ENCODE measurements at regions of chr18 and their contacts with region 1.

Region 1: GRCh38 chr18:38872342-38872741 is 1306.7 kb upstream of the CELF4 start:
- DNase-seq: no peak
- ATAC-seq: no peak
- H3K4me3 ChIP-seq: no peak overlapping the region
- H3K27ac ChIP-seq: no peak overlapping the region
- H3K4me1 ChIP-seq: no peaks in the 10 kb centered on the region
- H3K27me3 ChIP-seq: no peaks in the 10 kb centered on the region
- CTCF ChIP-seq: no peak
- POLR2A ChIP-seq: no peak

Region 2: DNA sequence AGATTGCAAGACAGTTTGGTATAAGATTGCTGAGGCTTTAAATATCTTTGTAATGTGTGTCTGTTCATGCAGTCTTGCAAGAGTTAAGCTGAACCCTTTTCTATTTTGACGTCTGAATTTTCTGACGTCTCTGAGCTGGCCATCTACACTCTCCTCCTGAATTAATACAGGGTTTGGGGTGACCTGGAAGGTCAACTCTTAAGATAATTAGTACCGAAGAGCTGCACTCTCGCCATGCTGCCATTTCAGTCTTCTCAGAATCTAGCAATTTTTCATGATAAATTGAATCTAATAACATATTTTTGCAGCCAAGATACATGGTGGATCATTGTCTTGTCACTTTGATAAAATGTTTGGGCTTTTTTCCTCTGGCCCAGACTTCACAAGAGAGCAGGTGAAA is 61.6 kb before region 1 on chr18:
- intact Hi-C with region 1: loop called in 1 of 10 experiments (anchors 10 kb)
- DNase-seq: no peak
- ATAC-seq: no peak
- H3K4me3 ChIP-seq: no peak overlapping the region
- H3K27ac ChIP-seq: no peak overlapping the region
- H3K4me1 ChIP-seq: no peaks in the 10 kb centered on the region
- H3K27me3 ChIP-seq: no peaks in the 10 kb centered on the region
- CTCF ChIP-seq: no peak
- POLR2A ChIP-seq: no peak